Pancreas (tissue), 10 donors: ENCODE measurements at regions of chrX and their contacts with region 1.

Region 1: GRCh38 chrX:118644378-118644777 is 83.0 kb upstream of the IL13RA1 start:
- DNase-seq: no peak
- ATAC-seq: peak in 3 of 4 donors; percentile 80 to 86 (median 82)
- H3K4me3 ChIP-seq: no peak overlapping the region
- H3K27ac ChIP-seq: no peak overlapping the region
- H3K4me1 ChIP-seq: no peaks in the 10 kb centered on the region
- H3K27me3 ChIP-seq: no peaks in the 10 kb centered on the region
- CTCF ChIP-seq: peak in 3 of 4 donors; percentile 11 to 26 (median 24)

Region 2: DNA sequence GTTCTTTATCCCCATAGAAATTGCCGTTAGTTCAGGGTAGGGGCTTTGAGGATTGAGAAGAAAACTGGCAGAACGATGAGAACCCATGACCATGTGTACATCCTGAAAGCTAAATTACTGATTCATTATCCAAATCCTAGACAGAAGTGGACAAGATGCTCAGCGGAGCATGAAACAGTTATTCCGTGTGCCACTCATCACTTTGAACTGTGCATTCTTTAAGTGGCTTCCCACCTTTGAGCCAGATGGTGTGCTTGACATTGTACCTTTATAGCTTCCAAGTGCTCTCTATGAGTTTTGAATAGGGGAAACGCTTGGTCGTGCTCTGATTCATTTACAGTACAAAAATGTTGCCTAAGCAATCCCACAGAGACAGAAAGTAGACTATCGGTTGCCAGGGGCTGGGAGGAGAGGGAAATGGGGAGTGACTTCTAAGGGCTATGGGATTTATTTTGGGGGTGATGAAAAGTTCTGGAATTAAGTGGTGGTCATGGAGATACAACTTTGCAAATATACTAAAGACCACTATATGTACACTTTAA is 48.8 kb before region 1 on chrX:
- intact Hi-C with region 1: no loop called
- DNase-seq: no peak
- ATAC-seq: peak in 1 of 4 donors; percentile 29
- H3K4me3 ChIP-seq: no peak overlapping the region
- H3K27ac ChIP-seq: no peak overlapping the region
- H3K4me1 ChIP-seq: no peaks in the 10 kb centered on the region
- H3K27me3 ChIP-seq: no peaks in the 10 kb centered on the region
- CTCF ChIP-seq: no peak

Region 3: DNA sequence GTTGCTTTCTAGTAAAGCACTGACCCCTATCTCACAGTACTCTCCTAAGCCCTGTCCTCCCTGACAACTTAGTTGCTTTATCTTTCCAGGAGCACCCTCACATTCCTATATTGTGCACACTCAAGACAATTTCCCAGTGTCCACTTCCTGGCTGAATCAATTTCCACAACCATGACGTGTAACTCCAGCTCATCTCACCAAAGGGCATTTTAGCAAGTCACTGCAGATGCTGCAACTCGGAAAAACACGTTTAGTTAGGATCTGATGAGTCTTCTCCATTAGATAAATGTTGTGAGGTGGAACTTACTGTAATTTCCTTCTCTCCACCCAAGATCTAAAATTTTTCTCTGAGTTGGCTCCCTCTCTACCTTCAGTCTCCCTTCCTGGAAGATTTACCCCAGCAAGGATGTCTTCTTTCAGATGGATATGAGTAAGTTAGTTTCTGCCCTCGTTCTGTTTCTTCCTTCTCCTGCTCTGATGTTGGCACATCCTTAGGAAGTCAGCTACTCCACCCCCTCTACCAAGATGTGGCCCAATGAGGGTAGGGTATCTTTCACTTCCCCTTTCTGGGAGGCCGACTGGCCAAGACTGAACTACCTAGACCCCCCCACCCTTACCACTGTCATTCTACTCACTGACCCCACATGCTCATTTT is 54.3 kb after region 1 on chrX:
- intact Hi-C with region 1: no loop called
- DNase-seq: no peak
- ATAC-seq: peak in 1 of 4 donors; percentile 54
- H3K4me3 ChIP-seq: no peak overlapping the region
- H3K27ac ChIP-seq: no peak overlapping the region
- H3K4me1 ChIP-seq: no peaks in the 10 kb centered on the region
- H3K27me3 ChIP-seq: peaks cover 0 to 3% (median 0%) of the 10 kb centered on the region in 4 donors
- CTCF ChIP-seq: no peak

Region 4: DNA sequence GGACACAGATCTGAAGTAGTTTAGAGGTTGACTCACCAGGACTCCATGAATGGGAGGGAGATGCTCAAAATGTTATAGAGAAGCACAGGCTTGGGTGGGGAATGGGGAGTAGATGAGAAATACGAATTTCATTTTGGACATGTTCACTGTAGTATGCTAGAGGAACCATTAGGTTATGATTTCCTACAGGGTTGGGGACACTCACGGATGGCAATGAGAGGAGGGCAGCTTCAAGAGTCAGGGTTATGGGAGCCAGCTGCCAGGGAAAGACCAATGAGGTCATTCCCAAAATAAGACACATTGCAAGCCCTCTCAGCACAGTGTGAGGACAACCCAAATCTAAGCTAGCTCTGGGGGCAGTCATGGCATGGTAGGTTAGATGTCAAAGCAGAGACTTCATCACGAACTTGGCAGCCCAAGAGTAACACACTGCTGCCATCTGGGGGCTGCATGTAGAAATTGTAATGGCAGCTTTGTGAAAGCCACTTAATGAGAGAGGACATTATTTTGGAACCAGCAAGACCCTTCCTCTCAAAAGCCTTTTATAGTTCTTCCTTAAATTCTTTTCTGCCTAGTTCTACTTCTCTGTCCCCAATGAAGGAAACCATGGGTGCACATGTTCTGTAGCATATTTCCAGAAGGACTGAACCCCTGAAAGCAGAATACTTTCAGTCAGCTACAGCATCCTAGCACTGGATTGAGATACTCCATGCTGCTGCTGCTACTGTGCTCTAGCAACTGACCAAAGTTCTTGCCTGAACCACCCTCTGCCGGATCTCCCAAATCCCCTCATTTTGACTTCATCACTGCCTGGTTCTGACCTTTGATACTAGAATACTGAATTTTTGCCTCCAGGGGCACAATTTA is 163.0 kb after region 1 on chrX:
- intact Hi-C with region 1: loop called in 1 of 3 experiments (anchors 10 kb)
- DNase-seq: peak in 4 of 6 donors; percentile 7 to 49 (median 26)
- ATAC-seq: peak; percentile 40 to 88 (median 82)
- H3K4me3 ChIP-seq: no peak overlapping the region
- H3K27ac ChIP-seq: no peak overlapping the region
- H3K4me1 ChIP-seq: no peaks in the 10 kb centered on the region
- H3K27me3 ChIP-seq: no peaks in the 10 kb centered on the region
- CTCF ChIP-seq: peak in 3 of 4 donors; percentile 42 to 55 (median 53)